Ovary (tissue), 10 donors: ENCODE measurements at regions of chr12 and their contacts with region 1.

Region 1: GRCh38 chr12:124422570-124423523 is 128.0 kb downstream of the RFLNA start:
- DNase-seq: peak; percentile 95 to 98 (median 97)
- H3K4me3 ChIP-seq: peak overlapping the region; percentile 31
- H3K27ac ChIP-seq: peak overlapping the region; percentile 58 to 86
- H3K4me1 ChIP-seq: peaks cover 19% of the 10 kb centered on the region
- H3K27me3 ChIP-seq: no peaks in the 10 kb centered on the region
- CTCF ChIP-seq: peak in 2 of 3 donors; percentile 6 to 31
- EP300 ChIP-seq: peak; percentile 86
- POLR2A ChIP-seq: no peak

Region 2: DNA sequence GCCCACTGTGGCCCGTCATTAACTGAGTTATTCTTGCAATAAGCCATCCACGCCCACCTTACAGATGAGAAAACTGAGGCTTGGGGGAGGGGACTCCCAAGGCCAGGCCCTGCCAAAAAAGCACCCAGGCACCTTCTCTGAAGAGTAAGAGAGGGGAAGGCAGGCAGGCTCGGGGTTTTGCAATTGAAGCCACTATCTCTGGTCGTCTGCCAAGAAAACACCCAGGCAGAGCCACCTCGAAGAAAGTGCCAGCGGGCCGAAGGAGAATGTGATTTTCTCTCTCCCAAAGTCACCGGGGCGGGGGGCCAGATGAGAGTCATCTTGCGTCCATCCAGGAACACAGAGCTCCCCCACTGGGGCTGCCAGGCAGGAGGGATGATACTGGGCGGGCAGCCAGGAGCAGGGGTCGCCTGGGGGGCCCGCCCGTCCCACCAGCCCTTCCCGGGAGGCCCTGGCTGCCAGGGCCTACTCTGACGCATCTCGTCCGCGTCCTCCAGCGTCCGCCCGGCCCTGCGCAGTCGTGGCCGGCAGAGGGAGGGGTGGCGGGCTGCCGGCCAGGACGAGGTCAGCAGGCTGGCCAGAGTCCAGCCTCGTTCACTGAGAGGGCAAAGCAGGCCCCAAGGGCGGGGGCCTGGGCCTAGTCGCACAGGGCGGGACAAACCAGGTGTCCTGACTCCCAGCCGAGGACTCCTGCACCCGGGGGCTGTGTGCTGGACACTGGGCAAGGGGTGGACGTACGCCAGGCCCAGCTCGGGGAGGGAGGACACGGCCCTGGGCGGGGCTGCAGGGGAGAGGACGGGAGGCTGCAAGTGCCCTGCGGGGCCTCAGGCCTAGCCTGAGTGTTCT is 53.6 kb before region 1 on chr12:
- intact Hi-C with region 1: loop called in 1 of 4 experiments (anchors 10 kb)
- DNase-seq: peak; percentile 94 to 98 (median 96)
- H3K4me3 ChIP-seq: no peak overlapping the region
- H3K27ac ChIP-seq: peak overlapping the region; percentile 87 to 90
- H3K4me1 ChIP-seq: peaks cover 22% of the 10 kb centered on the region
- H3K27me3 ChIP-seq: no peaks in the 10 kb centered on the region
- CTCF ChIP-seq: peak; percentile 61 to 87 (median 67)
- EP300 ChIP-seq: peak; percentile 29
- POLR2A ChIP-seq: no peak

Region 3: GRCh38 chr12:124388679-124389536 is 33.9 kb before region 1 on chr12:
- intact Hi-C with region 1: loop called in 1 of 4 experiments (anchors 1 kb)
- DNase-seq: peak; percentile 84 to 93 (median 91)
- H3K4me3 ChIP-seq: peak overlapping the region; percentile 47
- H3K27ac ChIP-seq: peak overlapping the region; percentile 58 to 83
- H3K4me1 ChIP-seq: peaks cover 27% of the 10 kb centered on the region
- H3K27me3 ChIP-seq: no peaks in the 10 kb centered on the region
- CTCF ChIP-seq: peak in 1 of 3 donors; percentile 15
- EP300 ChIP-seq: no peak
- POLR2A ChIP-seq: peak; percentile 23

Region 4: GRCh38 chr12:124636138-124636978 is 213.5 kb after region 1 on chr12:
- intact Hi-C with region 1: no loop called
- DNase-seq: peak in 1 of 5 donors; percentile 49
- H3K4me3 ChIP-seq: no peak overlapping the region
- H3K27ac ChIP-seq: no peak overlapping the region
- H3K4me1 ChIP-seq: peaks cover 6% of the 10 kb centered on the region
- H3K27me3 ChIP-seq: no peaks in the 10 kb centered on the region
- CTCF ChIP-seq: no peak
- EP300 ChIP-seq: no peak
- POLR2A ChIP-seq: no peak